ENCODE measurements at regions of chr10 and their contacts with region 1.

Region 1: DNA sequence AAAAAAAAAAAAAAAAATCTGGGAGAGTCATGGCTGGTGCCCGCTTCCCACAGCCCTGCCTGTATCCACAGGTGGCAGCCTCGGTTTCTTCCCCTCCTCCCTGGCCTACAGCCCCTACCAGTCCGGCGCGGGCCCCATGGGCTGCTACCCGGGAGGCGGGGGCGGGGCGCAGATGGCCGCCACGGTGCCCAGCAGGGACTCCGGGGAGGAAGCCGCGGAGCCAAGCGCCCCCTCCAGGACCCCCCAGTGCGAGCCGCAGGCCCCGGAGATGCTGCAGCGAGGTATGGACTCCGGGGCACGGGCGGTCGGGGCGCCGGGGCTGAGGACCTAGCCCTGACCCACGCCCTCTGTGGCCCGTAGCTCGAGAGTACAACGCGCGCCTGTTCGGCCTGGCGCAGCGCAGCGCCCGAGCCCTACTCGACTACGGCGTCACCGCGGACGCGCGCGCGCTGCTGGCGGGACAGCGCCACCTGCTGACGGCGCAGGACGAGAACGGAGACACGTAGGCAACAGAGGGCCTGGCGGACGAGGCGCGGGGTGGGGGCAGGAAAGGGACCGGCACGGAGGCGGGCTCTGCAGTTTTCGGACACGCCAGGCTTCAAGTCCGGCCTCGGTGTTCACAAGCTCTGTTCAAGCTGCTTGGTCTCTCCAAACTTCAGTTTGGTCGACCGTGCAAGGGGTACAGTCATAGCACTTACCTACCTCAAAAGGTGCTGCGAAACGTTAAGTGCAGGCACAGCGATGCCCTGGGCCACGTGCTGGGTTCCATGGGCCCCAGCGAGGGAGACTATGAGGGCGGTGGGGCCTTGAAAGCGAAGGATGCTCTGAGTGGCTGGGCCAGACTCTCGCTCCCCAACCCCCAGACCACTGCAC is 3.9 kb downstream of the NFKB2 start:
- DNase-seq: peak; percentile 89 to 91
- H3K4me3 ChIP-seq: peak overlapping the region in 2 of 3 donors; percentile 52 to 65
- H3K27ac ChIP-seq: peak overlapping the region; percentile 67 to 90 (median 84)
- H3K4me1 ChIP-seq: peaks cover 7 to 22% of the 10 kb centered on the region in 2 donors
- H3K27me3 ChIP-seq: no peaks in the 10 kb centered on the region
- CTCF ChIP-seq: peak; percentile 74 to 98 (median 96)
- POLR2A ChIP-seq: peak in 1 of 2 donors; percentile 62

Region 2: DNA sequence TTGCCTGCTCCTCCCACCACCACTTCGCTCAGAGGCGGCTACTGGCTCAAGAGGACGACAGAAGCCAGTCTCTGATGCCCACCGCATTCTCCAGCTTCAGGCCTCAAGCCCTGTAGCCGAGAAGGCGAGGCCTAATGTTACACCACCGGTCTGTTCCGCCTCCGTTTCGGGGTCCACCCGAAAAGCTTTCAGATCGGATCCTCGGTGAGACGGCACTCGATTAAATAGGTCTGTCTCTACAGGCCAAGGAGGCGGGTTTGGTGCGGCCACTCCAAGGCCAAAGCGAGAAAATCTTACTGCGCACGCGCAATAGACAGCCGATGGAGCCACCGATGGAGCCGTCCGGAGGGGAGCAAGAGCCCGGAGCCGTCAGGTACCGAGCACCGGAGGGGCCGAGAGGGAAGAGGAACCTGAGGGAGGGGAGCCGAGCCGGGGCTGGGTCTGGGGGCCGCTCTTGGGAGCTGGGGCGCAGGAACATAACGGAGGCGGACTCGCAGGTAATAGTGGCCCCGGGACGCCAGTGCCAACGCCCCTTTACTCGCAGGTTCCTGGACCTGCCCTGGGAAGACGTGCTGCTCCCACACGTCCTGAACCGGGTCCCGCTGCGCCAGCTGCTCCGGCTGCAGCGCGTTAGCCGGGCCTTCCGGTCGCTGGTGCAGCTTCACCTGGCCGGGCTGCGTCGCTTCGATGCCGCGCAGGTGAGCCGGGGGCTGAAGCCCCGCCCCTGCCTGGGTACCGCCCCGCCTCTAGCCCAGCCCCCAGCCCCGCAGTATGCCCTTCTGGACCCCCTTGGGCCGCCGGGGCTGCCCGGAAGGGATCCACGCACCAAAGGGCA is 21.6 kb after region 1 on chr10 and contains the start of gene FBXL15:
- intact Hi-C with region 1: no loop called
- DNase-seq: peak; percentile 98
- H3K4me3 ChIP-seq: peak within 1 kb of the TSS; percentile 3 to 91 (median 88)
- H3K27ac ChIP-seq: peak within 1 kb of the TSS; percentile 32 to 92 (median 87)
- H3K4me1 ChIP-seq: peaks cover 29 to 36% of the 10 kb centered on the region in 2 donors
- H3K27me3 ChIP-seq: no peaks in the 10 kb centered on the region
- CTCF ChIP-seq: peak in 1 of 6 experiments; percentile 35
- POLR2A ChIP-seq: peak in 1 of 2 donors; percentile 65
- total RNA-seq, gene FBXL15: 13.4 to 34.0 (median 27.2) TPM

Region 3: GRCh38 chr10:102484021-102484420 is 84.6 kb after region 1 on chr10:
- intact Hi-C with region 1: loop called (anchors 5 kb)
- DNase-seq: no peak
- H3K4me3 ChIP-seq: no peak overlapping the region
- H3K27ac ChIP-seq: no peak overlapping the region
- H3K4me1 ChIP-seq: no peaks in the 10 kb centered on the region
- H3K27me3 ChIP-seq: no peaks in the 10 kb centered on the region
- CTCF ChIP-seq: no peak
- POLR2A ChIP-seq: no peak